HepG2 (cell line): ENCODE measurements at regions of chr11 and their contacts with region 1.

Region 1: GRCh38 chr11:72752088-72752914 is at the start of gene ARAP1:
- DNase-seq: peak; percentile 68
- ATAC-seq: peak; percentile 60
- H3K4me3 ChIP-seq: peak within 1 kb of the TSS; percentile 77 to 94 (median 88)
- H3K27ac ChIP-seq: peak within 1 kb of the TSS; percentile 83
- H3K4me1 ChIP-seq: peaks cover 56% of the 10 kb centered on the region
- H3K27me3 ChIP-seq: no peaks in the 10 kb centered on the region; a peak in 1 of 5 replicates
- CTCF ChIP-seq: peak; percentile 24
- EP300 ChIP-seq: no peak
- POLR2A ChIP-seq: peak; percentile 25 to 62
- RAD21 ChIP-seq: peak; percentile 27; the same call in 1 of the 2 replicates
- total RNA-seq, gene ARAP1: 55.2 and 55.5 TPM in 2 replicates

Region 2: GRCh38 chr11:72378704-72379384 is 373.5 kb before region 1 on chr11:
- CTCF ChIA-PET with region 1: no interaction called
- POLR2A ChIA-PET with region 1: no interaction called
- in situ Hi-C with region 1: no loop called
- intact Hi-C with region 1: no loop called
- DNase-seq: no peak
- ATAC-seq: no peak
- H3K4me3 ChIP-seq: no peak overlapping the region
- H3K27ac ChIP-seq: no peak overlapping the region
- H3K4me1 ChIP-seq: peaks cover 13% of the 10 kb centered on the region
- H3K27me3 ChIP-seq: no peaks in the 10 kb centered on the region
- CTCF ChIP-seq: no peak
- EP300 ChIP-seq: no peak
- POLR2A ChIP-seq: no peak
- RAD21 ChIP-seq: no peak

Region 3: DNA sequence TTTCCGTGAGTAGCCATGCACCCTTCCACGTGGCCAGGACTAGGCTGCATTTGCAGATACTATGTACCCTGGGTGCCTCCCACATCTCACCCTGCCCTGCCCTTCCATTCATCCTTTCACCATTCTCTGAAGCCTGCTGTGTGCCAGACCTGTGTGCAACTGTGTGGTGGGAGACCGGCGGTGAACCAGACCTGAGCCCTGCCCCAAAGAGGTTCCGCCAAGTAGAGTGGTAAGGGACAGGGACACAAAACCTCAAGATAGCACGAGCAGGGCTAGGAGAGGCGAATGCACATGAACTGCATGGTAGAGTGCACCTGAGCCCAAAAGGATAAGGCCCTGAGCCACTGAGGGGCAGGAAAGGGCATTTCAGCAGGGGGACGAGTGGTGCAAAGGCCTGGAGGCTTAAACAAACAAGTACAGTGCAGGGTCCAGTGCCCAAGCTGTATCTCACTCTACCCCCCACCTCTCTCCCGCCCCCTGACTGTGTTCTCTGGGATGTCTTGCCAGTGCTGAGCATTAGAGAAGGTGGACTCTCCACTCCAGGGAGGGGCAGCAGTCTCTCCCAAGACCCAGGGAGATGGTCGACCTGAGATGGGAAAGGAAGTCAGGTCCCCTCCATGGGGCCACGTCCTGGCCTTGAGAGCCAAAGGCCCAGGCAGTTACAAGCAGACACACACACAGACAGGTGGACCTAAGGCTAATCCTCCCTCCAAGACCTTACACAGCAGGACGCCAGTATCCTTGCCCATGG is 14.0 kb after region 1 on chr11:
- CTCF ChIA-PET with region 1: no interaction called
- POLR2A ChIA-PET with region 1: interaction called, 12 read pairs
- in situ Hi-C with region 1: no loop called
- intact Hi-C with region 1: loop called (anchors 2 kb)
- DNase-seq: peak; percentile 85
- ATAC-seq: peak; percentile 95
- H3K4me3 ChIP-seq: peak overlapping the region; percentile 29 to 63 (median 31); a peak in 5 of 6 replicates
- H3K27ac ChIP-seq: peak overlapping the region; percentile 88
- H3K4me1 ChIP-seq: peaks cover 56% of the 10 kb centered on the region
- H3K27me3 ChIP-seq: no peaks in the 10 kb centered on the region
- CTCF ChIP-seq: peak; percentile 70
- EP300 ChIP-seq: peak in 1 of 2 experiments; percentile 54; a peak in 1 of 4 replicates
- POLR2A ChIP-seq: no peak; a peak in 1 of 4 replicates
- RAD21 ChIP-seq: peak; percentile 80

Region 4: GRCh38 chr11:72781313-72782050 is 29.2 kb after region 1 on chr11:
- CTCF ChIA-PET with region 1: no interaction called
- POLR2A ChIA-PET with region 1: interaction called, 30 read pairs
- in situ Hi-C with region 1: no loop called
- intact Hi-C with region 1: no loop called
- DNase-seq: no peak
- ATAC-seq: peak; percentile 7
- H3K4me3 ChIP-seq: peak overlapping the region; percentile 81 to 88 (median 87)
- H3K27ac ChIP-seq: peak overlapping the region; percentile 79
- H3K4me1 ChIP-seq: peaks cover 90% of the 10 kb centered on the region
- H3K27me3 ChIP-seq: no peaks in the 10 kb centered on the region; a peak in 1 of 5 replicates
- CTCF ChIP-seq: no peak
- EP300 ChIP-seq: no peak; a peak in 1 of 4 replicates
- POLR2A ChIP-seq: no peak
- RAD21 ChIP-seq: no peak

Region 5: GRCh38 chr11:72787216-72788104 is 35.2 kb after region 1 on chr11:
- CTCF ChIA-PET with region 1: no interaction called
- POLR2A ChIA-PET with region 1: interaction called, 19 read pairs
- in situ Hi-C with region 1: loop called (anchors 5 kb)
- intact Hi-C with region 1: no loop called
- DNase-seq: peak; percentile 94
- ATAC-seq: peak; percentile 90
- H3K4me3 ChIP-seq: peak overlapping the region in 2 of 3 experiments; percentile 33 to 57
- H3K27ac ChIP-seq: peak overlapping the region; percentile 72
- H3K4me1 ChIP-seq: peaks cover 95% of the 10 kb centered on the region
- H3K27me3 ChIP-seq: no peaks in the 10 kb centered on the region
- CTCF ChIP-seq: peak; percentile 52
- EP300 ChIP-seq: peak in 1 of 2 experiments; percentile 19; a peak in 1 of 4 replicates
- POLR2A ChIP-seq: peak in 1 of 2 experiments; percentile 38; a peak in 1 of 4 replicates
- RAD21 ChIP-seq: peak; percentile 76

Region 6: DNA sequence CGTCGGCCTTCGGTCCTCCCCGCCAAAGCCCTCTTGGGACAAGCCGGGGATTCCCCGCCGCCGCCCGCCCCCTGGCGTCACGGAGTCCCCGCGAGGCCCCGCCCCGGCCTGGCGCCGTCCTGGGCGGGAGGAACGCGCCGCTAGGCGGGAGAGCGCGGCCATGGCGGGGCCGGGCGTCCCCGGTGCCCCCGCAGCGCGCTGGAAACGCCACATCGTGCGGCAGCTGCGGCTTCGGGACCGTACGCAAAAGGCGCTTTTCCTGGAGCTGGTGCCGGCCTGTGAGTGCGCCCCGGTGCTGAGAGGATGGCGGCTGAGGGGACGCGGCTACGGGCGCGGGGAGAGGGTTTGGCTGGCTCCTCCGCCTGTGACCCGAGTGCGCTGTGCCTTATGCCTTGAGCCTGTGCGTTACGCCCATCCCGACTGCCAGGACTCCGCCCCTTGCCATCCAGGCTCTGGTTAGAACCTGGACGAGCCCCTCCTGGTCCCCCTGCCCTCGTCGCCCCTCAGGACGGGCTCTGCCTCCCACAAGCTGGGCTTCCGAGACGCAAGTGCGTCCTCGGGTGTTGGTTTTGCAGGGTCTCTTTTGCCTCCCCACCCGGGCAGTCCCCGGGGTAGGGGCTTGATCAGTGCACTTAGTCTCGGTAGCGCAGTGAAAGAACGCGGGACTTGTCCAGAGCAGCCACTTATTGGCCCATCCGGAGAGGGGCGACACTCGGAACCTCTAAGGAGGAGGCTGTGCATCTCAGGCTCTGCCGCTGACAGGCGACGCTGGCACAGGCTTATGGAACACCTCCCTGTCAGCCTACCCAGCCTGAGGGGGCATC is 62.2 kb after region 1 on chr11 and contains the start of gene ATG16L2:
- CTCF ChIA-PET with region 1: no interaction called
- POLR2A ChIA-PET with region 1: no interaction called
- in situ Hi-C with region 1: no loop called
- intact Hi-C with region 1: loop called (anchors 1 kb)
- DNase-seq: peak; percentile 64
- ATAC-seq: peak; percentile 83
- H3K4me3 ChIP-seq: peak within 1 kb of the TSS; percentile 73 to 90 (median 82)
- H3K27ac ChIP-seq: peak within 1 kb of the TSS; percentile 94
- H3K4me1 ChIP-seq: peaks cover 37% of the 10 kb centered on the region
- H3K27me3 ChIP-seq: no peaks in the 10 kb centered on the region; a peak in 1 of 5 replicates
- CTCF ChIP-seq: peak; percentile 34
- EP300 ChIP-seq: 0 out of 4 replicates have a peak, but pooled peaks of 1 of the 2 experiments have one; percentile 9
- POLR2A ChIP-seq: peak; percentile 70 to 78
- RAD21 ChIP-seq: 0 out of 2 replicates have a peak, but pooled peaks have one; percentile 57
- total RNA-seq, gene ATG16L2: 0.79 and 6.2 TPM in 2 replicates

Region 7: DNA sequence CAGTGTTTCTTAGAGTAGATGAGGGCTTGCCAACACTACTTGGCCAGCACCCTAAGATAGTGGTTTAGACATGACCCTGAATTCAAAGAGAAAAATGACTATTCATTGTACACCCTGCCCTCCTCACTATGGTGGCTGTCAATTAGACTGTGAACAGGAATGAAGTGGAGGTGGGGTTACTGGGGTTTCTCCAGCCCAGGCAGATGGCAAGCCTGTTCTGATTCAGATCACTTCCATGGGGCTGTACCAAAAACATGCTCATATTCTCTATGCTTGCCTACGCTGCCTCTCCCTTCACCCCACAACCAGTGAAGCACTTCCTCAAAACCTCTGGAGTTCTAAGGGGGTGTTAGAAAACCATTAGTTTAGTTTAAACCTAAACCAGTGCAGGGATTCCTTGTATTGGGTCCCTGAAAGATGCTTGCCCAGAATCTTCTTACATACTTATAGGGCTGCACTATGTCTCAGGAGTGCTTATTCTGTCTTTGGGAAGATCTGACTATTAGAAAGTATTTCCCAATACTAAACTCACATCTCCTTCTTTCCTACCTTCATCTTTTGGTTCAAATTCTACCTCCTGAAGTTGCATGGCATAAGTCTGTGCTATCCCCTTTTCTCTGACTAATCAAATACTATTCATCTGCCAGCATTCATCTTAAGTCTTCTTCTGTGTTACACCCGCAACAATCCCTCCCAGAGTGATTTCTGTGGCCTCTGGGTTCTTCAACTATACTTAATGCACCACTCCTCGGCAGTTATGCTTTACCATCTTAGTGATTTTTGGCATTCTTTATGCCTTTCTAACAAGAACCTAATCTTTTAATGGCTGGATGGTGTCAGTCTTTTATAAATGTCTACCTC is 133.7 kb after region 1 on chr11:
- CTCF ChIA-PET with region 1: no interaction called
- POLR2A ChIA-PET with region 1: no interaction called
- in situ Hi-C with region 1: no loop called
- intact Hi-C with region 1: no loop called
- DNase-seq: no peak
- ATAC-seq: no peak
- H3K4me3 ChIP-seq: no peak overlapping the region
- H3K27ac ChIP-seq: no peak overlapping the region
- H3K4me1 ChIP-seq: no peaks in the 10 kb centered on the region
- H3K27me3 ChIP-seq: no peaks in the 10 kb centered on the region
- CTCF ChIP-seq: no peak
- EP300 ChIP-seq: no peak
- POLR2A ChIP-seq: no peak
- RAD21 ChIP-seq: no peak